Activated CD4-positive, alpha-beta T cell treated with anti-CD3 and anti-CD28 coated beads, Interleukin-2, amount 10 ng/mL, durations not matched to agents 24 days and 14 days (primary cell): ENCODE measurements at regions of chr6 and their contacts with region 1.

Region 1: DNA sequence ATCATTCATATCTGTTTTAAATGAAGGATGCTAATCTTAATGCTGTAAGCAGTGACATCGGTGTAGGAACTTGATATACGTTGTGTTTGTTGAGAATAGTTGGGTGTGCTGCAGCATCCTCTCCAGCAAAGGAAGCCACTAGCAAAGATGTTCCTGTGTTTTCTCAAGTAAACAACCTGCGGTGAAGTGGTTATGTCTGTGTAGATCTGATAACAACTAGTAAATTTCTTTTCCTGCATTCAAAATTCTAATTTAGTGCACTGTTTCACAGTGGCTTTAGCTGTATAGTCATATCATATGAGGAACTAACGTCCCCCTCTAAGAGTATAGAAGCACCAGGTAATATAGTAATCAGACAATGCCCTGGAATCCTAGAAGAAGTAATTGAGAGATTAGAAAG is 38.7 kb downstream of the NCOA7 start:
- DNase-seq: peak; percentile 78
- H3K4me3 Mint-ChIP-seq: peak overlapping the region; percentile 17
- H3K27ac Mint-ChIP-seq: peak overlapping the region; percentile 22
- H3K4me1 Mint-ChIP-seq: peaks cover 56% of the 10 kb centered on the region
- H3K27me3 Mint-ChIP-seq: no peaks in the 10 kb centered on the region

Region 2: DNA sequence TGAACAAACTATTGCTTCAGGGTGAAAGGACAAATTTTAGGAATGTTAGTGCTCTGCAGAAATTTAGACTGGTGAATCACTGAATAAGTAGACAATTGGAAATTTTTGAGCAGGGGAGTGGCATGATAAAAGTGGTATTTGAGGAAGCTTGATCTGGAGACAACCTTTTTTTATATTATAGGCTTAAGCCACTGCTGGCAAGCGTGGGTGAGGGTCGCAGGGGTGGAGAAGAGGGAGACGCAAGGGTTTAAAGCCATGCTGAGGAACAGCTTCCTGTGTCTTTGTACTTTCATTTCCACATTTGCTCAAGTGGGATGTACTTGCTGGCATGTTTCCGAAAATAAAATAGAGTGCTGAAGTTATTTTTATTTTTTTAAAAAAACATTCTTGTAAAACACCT is 15.0 kb before region 1 on chr6:
- intact Hi-C with region 1: loop called (anchors 2 kb)
- DNase-seq: peak; percentile 54
- H3K4me3 Mint-ChIP-seq: peak overlapping the region; percentile 17
- H3K27ac Mint-ChIP-seq: no peak overlapping the region
- H3K4me1 Mint-ChIP-seq: peaks cover 45% of the 10 kb centered on the region
- H3K27me3 Mint-ChIP-seq: no peaks in the 10 kb centered on the region

Region 3: GRCh38 chr6:126042001-126042419 is 212.6 kb after region 1 on chr6:
- intact Hi-C with region 1: no loop called
- DNase-seq: no peak
- H3K4me3 Mint-ChIP-seq: no peak overlapping the region
- H3K27ac Mint-ChIP-seq: no peak overlapping the region
- H3K4me1 Mint-ChIP-seq: no peaks in the 10 kb centered on the region
- H3K27me3 Mint-ChIP-seq: no peaks in the 10 kb centered on the region